ENCODE measurements at regions of chr1 and their contacts with region 1.

Region 1: DNA sequence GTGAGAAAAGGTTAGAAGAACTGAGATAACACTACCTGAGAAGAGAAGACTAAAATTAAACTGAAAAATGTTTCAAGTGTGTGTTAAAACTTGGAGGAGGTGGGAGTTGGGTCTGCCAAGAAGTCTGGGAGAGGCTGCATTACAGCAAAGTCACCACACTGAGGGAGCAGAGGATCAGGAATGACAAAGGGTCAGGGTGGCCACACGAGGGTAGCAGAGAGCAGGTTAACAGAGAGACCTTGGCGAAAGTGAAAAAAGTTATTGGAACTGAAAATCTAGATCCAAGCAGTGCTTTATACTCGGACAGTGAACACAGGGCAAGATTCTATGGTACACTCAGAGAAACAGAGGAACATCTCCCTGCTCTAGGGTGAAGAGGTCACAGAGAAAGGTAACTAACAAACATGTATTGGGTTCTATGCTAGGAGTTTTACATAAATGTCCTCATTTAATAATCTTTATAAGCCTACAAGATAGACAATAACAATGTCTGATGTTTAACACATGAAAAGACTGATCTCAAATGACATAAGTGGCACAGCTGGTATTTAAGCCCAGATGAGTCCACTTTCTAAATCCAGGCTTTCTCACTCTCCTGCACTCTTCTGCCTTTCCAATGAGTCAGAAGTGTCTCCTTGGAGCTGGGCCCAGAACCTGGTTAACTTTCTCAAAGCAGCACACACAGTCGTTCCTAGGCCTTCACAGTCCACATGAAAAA is 10.3 kb upstream of the CADM3 start:
- DNase-seq: no peak
- ATAC-seq: peak; percentile 99
- H3K4me3 ChIP-seq: no peak overlapping the region
- H3K27ac ChIP-seq: no peak overlapping the region
- H3K4me1 ChIP-seq: no peaks in the 10 kb centered on the region
- H3K27me3 ChIP-seq: no peaks in the 10 kb centered on the region
- CTCF ChIP-seq: peak; percentile 92

Region 2: DNA sequence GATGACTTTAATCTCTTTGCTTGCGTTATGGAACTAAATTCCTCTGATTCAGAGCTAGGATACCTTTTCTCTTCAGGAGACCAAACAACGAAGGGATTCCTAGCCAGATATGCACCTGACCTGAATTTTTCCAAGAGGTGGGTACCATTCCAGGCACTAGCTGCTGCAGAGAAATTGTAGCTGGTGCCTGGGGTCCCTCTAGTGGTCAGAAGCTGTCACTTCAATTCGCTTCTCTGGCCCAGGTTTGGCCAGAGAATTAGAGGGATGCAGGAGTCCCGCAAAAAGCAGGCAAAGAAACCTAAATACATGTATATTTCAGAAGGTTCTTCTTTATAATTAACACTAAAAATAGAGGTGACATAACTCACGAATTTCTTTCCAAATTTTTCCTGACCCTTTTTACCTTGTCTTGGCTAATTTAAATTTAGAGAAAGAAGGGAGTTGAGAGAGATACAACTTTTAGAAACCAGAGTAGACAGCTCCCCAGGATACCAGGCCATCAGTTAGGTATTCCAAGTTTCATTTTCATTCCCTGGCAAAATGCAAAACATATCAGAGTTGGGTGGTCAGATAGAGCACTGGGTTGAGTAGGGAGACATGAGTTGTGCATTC is 53.1 kb after region 1 on chr1:
- intact Hi-C with region 1: loop called (anchors 10 kb)
- DNase-seq: no peak
- ATAC-seq: peak; percentile 80
- H3K4me3 ChIP-seq: no peak overlapping the region
- H3K27ac ChIP-seq: no peak overlapping the region
- H3K4me1 ChIP-seq: no peaks in the 10 kb centered on the region
- H3K27me3 ChIP-seq: peaks cover 9% of the 10 kb centered on the region
- CTCF ChIP-seq: peak; percentile 95

Region 3: GRCh38 chr1:159891275-159892157 is 730.4 kb after region 1 on chr1:
- intact Hi-C with region 1: loop called (anchors 10 kb)
- DNase-seq: peak; percentile 90
- ATAC-seq: peak; percentile 97
- H3K4me3 ChIP-seq: no peak overlapping the region
- H3K27ac ChIP-seq: peak overlapping the region; percentile 78
- H3K4me1 ChIP-seq: peaks cover 23% of the 10 kb centered on the region
- H3K27me3 ChIP-seq: no peaks in the 10 kb centered on the region
- CTCF ChIP-seq: peak; percentile 97